Prostate gland (tissue), 2 donors: ENCODE measurements at regions of chr1 and their contacts with region 1.

Region 1: DNA sequence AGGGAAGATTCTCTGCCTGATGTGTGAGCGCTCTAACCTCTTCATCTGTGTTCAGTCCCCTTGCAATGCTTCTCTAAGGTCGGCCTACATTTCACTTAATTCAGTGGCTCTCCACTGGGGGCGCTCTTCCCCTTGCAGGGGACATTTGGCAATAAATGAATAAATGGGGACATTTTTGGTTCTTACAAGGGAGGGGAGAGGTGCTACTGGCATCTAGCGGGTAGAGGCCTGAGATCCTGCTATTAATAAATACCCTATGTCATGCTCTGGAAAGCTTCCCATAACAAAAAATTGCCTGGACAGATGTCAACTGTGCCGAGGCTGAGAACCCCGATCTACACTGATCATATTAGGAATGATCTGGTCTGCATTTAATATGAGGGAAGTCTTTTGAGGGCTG is 25.9 kb upstream of the DNAJC11 start:
- DNase-seq: no peak
- H3K4me3 ChIP-seq: no peak overlapping the region
- H3K27ac ChIP-seq: no peak overlapping the region
- H3K4me1 ChIP-seq: no peaks in the 10 kb centered on the region
- H3K27me3 ChIP-seq: no peaks in the 10 kb centered on the region
- CTCF ChIP-seq: peak; percentile 26 to 67 (median 54)
- POLR2A ChIP-seq: no peak

Region 2: DNA sequence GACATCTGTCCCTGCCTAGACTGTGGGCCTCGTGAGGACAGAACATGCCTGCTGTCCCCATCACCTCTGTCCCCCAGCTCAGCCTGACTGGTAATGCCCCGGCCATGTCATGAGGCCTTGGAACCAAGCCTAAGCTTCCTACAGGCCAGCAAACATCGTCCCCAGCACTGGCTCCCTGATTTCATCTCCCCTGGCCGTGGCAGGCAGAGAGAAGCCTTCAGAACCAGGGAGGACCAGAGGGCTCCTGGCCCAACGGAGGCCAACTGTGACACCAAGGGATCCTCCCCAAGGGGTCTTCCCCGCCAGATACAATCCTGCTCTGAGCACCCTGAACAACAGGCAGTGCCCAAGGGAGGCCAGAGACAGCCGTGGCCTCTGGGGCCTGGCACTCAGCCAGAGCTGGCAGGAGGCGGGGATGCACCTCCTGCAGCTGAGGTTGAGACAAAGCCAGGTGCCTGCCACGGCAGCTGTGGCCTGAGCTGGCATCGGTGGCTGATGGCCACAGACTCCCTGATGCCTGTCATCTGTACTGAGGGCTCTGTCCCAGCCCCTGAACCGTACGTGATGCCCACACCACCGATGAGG is 725.5 kb before region 1 on chr1:
- intact Hi-C with region 1: no loop called
- DNase-seq: no peak
- H3K4me3 ChIP-seq: no peak overlapping the region
- H3K27ac ChIP-seq: no peak overlapping the region
- H3K4me1 ChIP-seq: no peaks in the 10 kb centered on the region
- H3K27me3 ChIP-seq: no peaks in the 10 kb centered on the region
- CTCF ChIP-seq: no peak
- POLR2A ChIP-seq: no peak

Region 3: DNA sequence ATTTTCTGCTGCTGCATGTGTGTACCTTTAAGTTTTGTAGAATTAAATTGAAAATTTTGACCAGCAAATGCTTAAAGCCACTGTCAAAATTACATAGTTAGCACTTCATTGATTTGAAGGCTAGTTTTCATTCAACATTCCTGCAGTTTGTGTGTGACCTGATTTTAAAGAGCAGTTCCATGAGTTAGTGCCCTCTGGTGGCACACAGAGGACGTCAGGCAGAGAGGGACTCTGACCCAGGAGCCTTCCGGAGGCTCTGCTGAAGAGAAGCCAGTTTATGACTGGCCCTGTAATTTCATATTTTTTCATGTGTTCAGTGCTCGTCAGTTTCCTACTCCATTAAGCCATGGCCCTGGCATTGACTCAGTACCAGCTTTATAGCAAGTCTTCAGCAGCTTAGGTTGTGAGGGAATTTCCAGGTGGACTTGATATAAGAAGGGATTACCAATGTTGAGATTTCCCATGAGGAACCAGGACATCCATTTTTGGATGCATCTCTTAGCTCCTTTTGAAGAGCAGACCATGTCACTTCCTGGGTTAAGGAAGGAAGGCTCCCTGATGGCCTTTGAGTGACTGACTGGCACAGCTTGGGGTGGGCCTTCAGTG is 162.4 kb after region 1 on chr1:
- intact Hi-C with region 1: loop called (anchors 5 kb)
- DNase-seq: peak; percentile 35
- H3K4me3 ChIP-seq: no peak overlapping the region
- H3K27ac ChIP-seq: no peak overlapping the region
- H3K4me1 ChIP-seq: no peaks in the 10 kb centered on the region
- H3K27me3 ChIP-seq: no peaks in the 10 kb centered on the region
- CTCF ChIP-seq: peak; percentile 39 to 72 (median 66)
- POLR2A ChIP-seq: no peak

Region 4: GRCh38 chr1:6904466-6905170 is 177.1 kb after region 1 on chr1:
- intact Hi-C with region 1: no loop called
- DNase-seq: no peak
- H3K4me3 ChIP-seq: no peak overlapping the region
- H3K27ac ChIP-seq: no peak overlapping the region
- H3K4me1 ChIP-seq: no peaks in the 10 kb centered on the region
- H3K27me3 ChIP-seq: no peaks in the 10 kb centered on the region
- CTCF ChIP-seq: no peak
- POLR2A ChIP-seq: no peak

Region 5: GRCh38 chr1:7070389-7071029 is 343.0 kb after region 1 on chr1:
- intact Hi-C with region 1: loop called (anchors 5 kb)
- DNase-seq: peak; percentile 58
- H3K4me3 ChIP-seq: peak overlapping the region in 1 of 2 donors; percentile 6
- H3K27ac ChIP-seq: no peak overlapping the region
- H3K4me1 ChIP-seq: no peaks in the 10 kb centered on the region
- H3K27me3 ChIP-seq: no peaks in the 10 kb centered on the region
- CTCF ChIP-seq: peak; percentile 70 to 80 (median 74)
- POLR2A ChIP-seq: no peak

Region 6: DNA sequence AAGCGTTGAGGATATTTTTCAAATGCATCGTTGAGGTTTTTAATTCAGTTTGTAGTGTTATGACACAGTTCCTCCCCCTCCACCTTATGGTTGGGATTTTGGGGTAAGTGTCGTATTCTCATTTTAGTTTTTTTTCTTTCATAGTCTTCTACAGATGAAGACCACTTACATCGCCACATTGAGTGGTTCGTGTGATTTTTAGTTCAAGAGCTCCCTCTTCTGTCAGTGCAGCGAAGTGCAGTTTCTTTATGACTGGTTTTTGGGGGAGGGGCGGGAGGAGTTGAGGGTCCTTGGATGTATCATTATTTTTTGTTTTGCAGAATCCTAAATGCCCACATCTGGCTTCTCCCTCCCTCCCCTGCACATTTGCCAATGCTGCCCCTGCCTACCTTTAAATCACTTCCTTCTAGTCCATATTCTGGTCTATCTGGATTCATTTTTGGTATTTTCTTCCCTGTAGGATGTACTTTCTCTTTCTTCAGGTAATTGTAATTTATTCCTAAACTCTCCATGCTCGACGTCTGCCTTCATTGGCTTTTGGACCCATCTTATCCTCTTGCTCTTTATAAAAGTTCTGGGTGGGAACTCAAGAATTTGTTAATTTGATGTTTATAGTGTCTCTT is 490.8 kb after region 1 on chr1:
- intact Hi-C with region 1: loop called (anchors 5 kb)
- DNase-seq: no peak
- H3K4me3 ChIP-seq: no peak overlapping the region
- H3K27ac ChIP-seq: no peak overlapping the region
- H3K4me1 ChIP-seq: no peaks in the 10 kb centered on the region
- H3K27me3 ChIP-seq: no peaks in the 10 kb centered on the region
- CTCF ChIP-seq: peak in 3 of 4 experiments; percentile 54 to 72 (median 62)
- POLR2A ChIP-seq: no peak

Region 7: DNA sequence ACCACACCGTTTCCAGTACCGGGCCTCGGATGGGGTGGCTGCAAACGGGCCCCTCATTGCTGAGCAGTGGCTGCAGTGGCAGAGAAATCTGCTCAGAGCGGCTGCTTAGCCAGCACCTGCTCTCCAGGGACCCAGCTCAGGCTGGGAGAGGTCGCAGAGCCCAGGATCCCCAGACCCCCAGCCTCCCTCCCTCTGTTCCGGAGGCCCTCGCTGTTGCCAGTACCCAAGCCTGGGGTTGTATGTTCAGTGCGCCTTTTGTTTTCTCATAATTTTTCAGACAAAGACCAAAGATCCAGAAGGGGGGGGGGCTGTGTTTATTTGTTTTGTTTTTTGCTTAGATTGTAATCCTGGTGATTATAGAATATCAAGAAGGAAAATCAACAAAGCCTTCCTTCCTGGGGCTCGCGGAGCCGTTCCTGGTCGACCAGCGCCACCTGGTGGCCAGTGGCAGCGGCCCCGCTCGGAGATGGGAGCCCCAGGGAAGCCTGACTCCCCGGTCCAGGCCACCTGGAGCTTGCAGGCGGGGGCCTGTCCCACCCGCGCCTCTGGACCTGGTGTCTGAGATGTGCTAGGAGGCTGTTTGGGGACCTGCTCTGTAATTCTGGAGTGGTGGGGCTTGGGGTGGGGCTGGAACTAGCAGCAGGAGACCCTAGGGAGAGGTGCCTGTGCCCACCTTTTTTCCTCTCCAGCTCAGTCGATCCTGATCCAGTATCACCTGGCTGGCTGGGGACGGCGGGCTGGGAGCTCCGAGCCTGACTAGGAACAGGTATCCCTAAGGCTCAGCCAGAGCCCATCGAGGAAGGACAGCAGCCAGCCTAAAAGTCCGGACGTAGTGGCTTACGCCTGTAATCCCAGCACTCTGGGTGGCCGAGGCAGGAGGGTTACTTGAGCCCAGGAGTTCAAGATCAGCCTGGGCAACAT is 919.7 kb after region 1 on chr1:
- intact Hi-C with region 1: loop called (anchors 5 kb)
- DNase-seq: peak; percentile 54
- H3K4me3 ChIP-seq: no peak overlapping the region
- H3K27ac ChIP-seq: no peak overlapping the region
- H3K4me1 ChIP-seq: no peaks in the 10 kb centered on the region
- H3K27me3 ChIP-seq: no peaks in the 10 kb centered on the region
- CTCF ChIP-seq: peak; percentile 88 to 95 (median 94)
- POLR2A ChIP-seq: no peak